Mammary epithelial cell (primary cell): ENCODE measurements at regions of chr1 and their contacts with region 1.

Region 1: DNA sequence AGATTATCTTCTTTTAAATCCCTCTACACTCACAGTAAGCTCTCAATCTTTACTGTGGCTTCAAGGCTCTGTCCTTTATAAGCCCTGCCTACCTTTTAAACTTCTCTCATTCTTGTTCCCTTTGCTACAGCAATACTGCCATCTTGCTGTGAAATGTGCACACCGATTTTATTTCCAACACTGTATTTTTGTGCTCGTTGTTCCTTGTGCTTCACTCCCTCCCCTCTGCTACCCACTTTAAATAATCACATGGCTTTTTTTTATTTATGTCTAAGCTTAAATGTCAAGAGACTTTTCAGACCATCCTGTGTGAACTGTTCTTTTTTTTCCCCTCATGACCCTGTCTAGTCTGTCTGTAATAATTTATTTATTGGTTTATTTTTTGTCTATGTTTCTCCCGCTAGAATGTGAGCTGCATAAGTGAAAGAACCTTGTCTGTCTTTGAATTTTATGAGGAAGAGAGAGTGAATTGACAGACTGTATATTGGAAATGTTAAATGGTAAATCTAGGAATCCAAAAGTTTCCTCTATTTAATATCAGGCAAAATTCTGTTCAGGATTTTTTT is 45.7 kb downstream of the ABCD3 start:
- DNase-seq: peak; percentile 55
- H3K4me3 ChIP-seq: no peak overlapping the region
- H3K27ac ChIP-seq: no peak overlapping the region
- H3K4me1 ChIP-seq: no peaks in the 10 kb centered on the region
- H3K27me3 ChIP-seq: no peaks in the 10 kb centered on the region
- CTCF ChIP-seq: peak; percentile 43 to 58

Region 2: GRCh38 chr1:94045465-94046056 is 418.3 kb before region 1 on chr1:
- CTCF ChIA-PET with region 1: no interaction called
- dilution Hi-C with region 1: no loop called
- in situ Hi-C with region 1: loop called in 1 of 2 experiments (anchors 25 kb)
- intact Hi-C with region 1: loop called (anchors 5 kb)
- DNase-seq: peak; percentile 91
- H3K4me3 ChIP-seq: no peak overlapping the region
- H3K27ac ChIP-seq: no peak overlapping the region
- H3K4me1 ChIP-seq: peaks cover 16% of the 10 kb centered on the region
- H3K27me3 ChIP-seq: no peaks in the 10 kb centered on the region
- CTCF ChIP-seq: peak; percentile 81

Region 3: GRCh38 chr1:94351485-94351884 is 112.4 kb before region 1 on chr1:
- CTCF ChIA-PET with region 1: no interaction called
- dilution Hi-C with region 1: no loop called
- in situ Hi-C with region 1: loop called in 1 of 2 experiments (anchors 10 kb)
- intact Hi-C with region 1: no loop called
- DNase-seq: no peak
- H3K4me3 ChIP-seq: no peak overlapping the region
- H3K27ac ChIP-seq: no peak overlapping the region
- H3K4me1 ChIP-seq: no peaks in the 10 kb centered on the region
- H3K27me3 ChIP-seq: no peaks in the 10 kb centered on the region
- CTCF ChIP-seq: no peak

Region 4: GRCh38 chr1:94417978-94418663 is 45.7 kb before region 1 on chr1 and contains the start of gene ABCD3:
- CTCF ChIA-PET with region 1: no interaction called
- dilution Hi-C with region 1: no loop called
- in situ Hi-C with region 1: no loop called
- intact Hi-C with region 1: loop called (anchors 5 kb)
- DNase-seq: peak; percentile 97
- H3K4me3 ChIP-seq: peak within 1 kb of the TSS; percentile 75 to 94 (median 91)
- H3K27ac ChIP-seq: peak within 1 kb of the TSS; percentile 91
- H3K4me1 ChIP-seq: peaks cover 37% of the 10 kb centered on the region
- H3K27me3 ChIP-seq: no peaks in the 10 kb centered on the region
- CTCF ChIP-seq: no peak
- total RNA-seq, gene ABCD3: 50.3 to 56.2 TPM

Region 5: DNA sequence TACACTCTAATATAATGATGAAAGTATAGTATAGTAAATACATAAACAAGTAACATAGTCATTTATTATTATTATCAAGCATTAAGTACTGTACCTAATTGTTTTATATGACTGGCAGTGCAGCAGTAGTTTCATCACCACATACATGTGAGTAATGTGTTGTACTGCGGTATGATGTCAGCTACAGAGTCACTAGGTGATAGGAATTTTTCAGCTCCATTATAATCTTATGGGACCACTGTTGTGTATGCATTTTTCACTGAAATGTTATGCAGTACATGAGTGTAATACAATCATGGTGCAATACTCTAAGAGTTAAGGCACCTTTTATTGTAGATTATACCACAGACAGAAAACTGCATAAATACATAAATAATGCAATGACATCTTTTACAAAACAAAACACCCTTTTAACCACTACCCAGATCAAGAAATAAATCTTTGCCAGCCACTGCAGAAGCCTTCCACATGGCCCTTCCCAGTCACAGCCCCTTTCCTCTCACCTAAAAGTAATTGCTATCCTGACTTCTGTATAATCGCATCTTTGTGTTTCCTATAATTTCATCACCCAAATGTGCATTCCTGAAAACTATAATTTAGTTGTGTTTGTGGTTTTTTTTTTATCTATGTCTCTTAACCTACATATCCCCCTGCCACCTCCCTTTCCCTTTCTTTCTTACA is 29.3 kb before region 1 on chr1:
- CTCF ChIA-PET with region 1: no interaction called
- dilution Hi-C with region 1: no loop called
- in situ Hi-C with region 1: no loop called
- intact Hi-C with region 1: no loop called
- DNase-seq: no peak
- H3K4me3 ChIP-seq: no peak overlapping the region
- H3K27ac ChIP-seq: no peak overlapping the region
- H3K4me1 ChIP-seq: no peaks in the 10 kb centered on the region
- H3K27me3 ChIP-seq: no peaks in the 10 kb centered on the region
- CTCF ChIP-seq: no peak

Region 6: DNA sequence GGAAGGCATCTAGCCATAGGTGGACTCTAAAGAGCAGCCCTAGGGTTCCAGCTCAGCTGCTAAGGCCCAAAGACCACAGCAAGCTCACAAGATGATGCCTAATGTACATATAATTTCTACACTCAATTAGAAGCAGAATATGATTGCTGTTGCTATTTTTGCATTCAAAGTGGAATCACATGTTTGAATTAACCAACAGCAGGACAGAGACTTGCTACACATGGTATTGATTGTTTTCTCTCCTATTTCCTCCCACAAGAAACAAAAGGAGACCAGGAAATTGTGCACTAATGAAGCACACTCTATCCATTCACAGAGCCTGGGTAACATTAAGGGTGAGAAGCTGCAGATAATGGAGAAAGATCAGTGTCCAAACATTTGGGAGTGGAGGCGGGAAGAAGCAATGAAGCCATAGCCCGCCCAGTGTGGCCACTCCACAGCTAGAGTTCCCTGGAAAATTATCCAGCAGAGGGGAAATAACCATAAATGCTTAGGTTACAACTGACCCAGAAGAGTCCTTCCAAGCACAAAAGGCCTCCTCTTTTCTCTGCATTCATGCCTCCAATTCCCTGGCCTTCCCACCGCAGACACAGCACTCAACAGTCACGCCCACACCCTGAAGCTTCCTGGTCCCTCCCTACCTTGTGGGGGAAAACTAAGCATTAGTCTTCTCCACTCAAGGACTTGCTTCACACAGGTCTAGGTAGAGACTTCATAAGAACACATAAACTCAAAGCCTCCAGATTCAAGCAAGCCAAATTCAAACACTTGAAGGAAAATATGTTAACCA is 455.6 kb after region 1 on chr1:
- CTCF ChIA-PET with region 1: interaction called, 12 read pairs
- dilution Hi-C with region 1: no loop called
- in situ Hi-C with region 1: no loop called
- intact Hi-C with region 1: no loop called
- DNase-seq: peak; percentile 20
- H3K4me3 ChIP-seq: no peak overlapping the region
- H3K27ac ChIP-seq: no peak overlapping the region
- H3K4me1 ChIP-seq: peaks cover 30% of the 10 kb centered on the region
- H3K27me3 ChIP-seq: no peaks in the 10 kb centered on the region
- CTCF ChIP-seq: no peak